CD8-positive, alpha-beta T cell (primary cell): ENCODE measurements at regions of chr17 and their contacts with region 1.

Region 1: GRCh38 chr17:75855310-75856081 is at the start of gene WBP2:
- DNase-seq: peak; percentile 93 to 100 (median 96)
- ATAC-seq: peak; percentile 90
- H3K4me3 ChIP-seq: peak within 1 kb of the TSS; percentile 79 to 83
- H3K4me3 Mint-ChIP-seq: no peak within 1 kb of the TSS
- H3K27ac ChIP-seq: peak within 1 kb of the TSS; percentile 84 to 94
- H3K27ac Mint-ChIP-seq: peak within 1 kb of the TSS; percentile 94
- H3K4me1 ChIP-seq: peaks cover 19% of the 10 kb centered on the region
- H3K4me1 Mint-ChIP-seq: peaks cover 29% of the 10 kb centered on the region
- H3K27me3 ChIP-seq: no peaks in the 10 kb centered on the region
- H3K27me3 Mint-ChIP-seq: no peaks in the 10 kb centered on the region
- CTCF ChIP-seq: peak; percentile 27
- total RNA-seq, gene WBP2: 69.1 to 80.2 TPM

Region 2: GRCh38 chr17:75576661-75577060 is 278.8 kb before region 1 on chr17:
- CTCF ChIA-PET with region 1: no interaction called
- POLR2A ChIA-PET with region 1: no interaction called
- intact Hi-C with region 1: no loop called
- DNase-seq: no peak
- ATAC-seq: no peak
- H3K4me3 ChIP-seq: no peak overlapping the region
- H3K4me3 Mint-ChIP-seq: no peak overlapping the region
- H3K27ac ChIP-seq: no peak overlapping the region
- H3K27ac Mint-ChIP-seq: no peak overlapping the region
- H3K4me1 ChIP-seq: no peaks in the 10 kb centered on the region
- H3K4me1 Mint-ChIP-seq: peaks cover 8% of the 10 kb centered on the region
- H3K27me3 ChIP-seq: no peaks in the 10 kb centered on the region
- H3K27me3 Mint-ChIP-seq: no peaks in the 10 kb centered on the region
- CTCF ChIP-seq: no peak

Region 3: GRCh38 chr17:75764711-75765421 is 90.6 kb before region 1 on chr17 and contains the start of gene GALK1:
- CTCF ChIA-PET with region 1: interaction called, 3 read pairs
- POLR2A ChIA-PET with region 1: interaction called, 25 read pairs
- intact Hi-C with region 1: no loop called
- DNase-seq: peak; percentile 46 to 89 (median 70)
- ATAC-seq: peak; percentile 94
- H3K4me3 ChIP-seq: peak within 1 kb of the TSS; percentile 62 to 86
- H3K4me3 Mint-ChIP-seq: peak within 1 kb of the TSS; percentile 74
- H3K27ac ChIP-seq: peak within 1 kb of the TSS; percentile 51 to 63
- H3K27ac Mint-ChIP-seq: peak within 1 kb of the TSS; percentile 55
- H3K4me1 ChIP-seq: peaks cover 16% of the 10 kb centered on the region
- H3K4me1 Mint-ChIP-seq: peaks cover 8% of the 10 kb centered on the region
- H3K27me3 ChIP-seq: no peaks in the 10 kb centered on the region
- H3K27me3 Mint-ChIP-seq: no peaks in the 10 kb centered on the region
- CTCF ChIP-seq: peak; percentile 40
- total RNA-seq, gene GALK1: 3.4 to 3.7 TPM

Region 4: GRCh38 chr17:75827252-75828115 is 28.0 kb before region 1 on chr17:
- CTCF ChIA-PET with region 1: interaction called, 8 read pairs
- POLR2A ChIA-PET with region 1: interaction called, 20 read pairs
- intact Hi-C with region 1: loop called in 1 of 2 experiments (anchors 2 kb)
- DNase-seq: peak in 8 of 9 experiments; percentile 46 to 85 (median 72)
- ATAC-seq: peak; percentile 66
- H3K4me3 ChIP-seq: peak overlapping the region; percentile 33 to 39
- H3K4me3 Mint-ChIP-seq: peak overlapping the region; percentile 55
- H3K27ac ChIP-seq: peak overlapping the region; percentile 50 to 78
- H3K27ac Mint-ChIP-seq: peak overlapping the region; percentile 88
- H3K4me1 ChIP-seq: peaks cover 31% of the 10 kb centered on the region
- H3K4me1 Mint-ChIP-seq: peaks cover 21% of the 10 kb centered on the region
- H3K27me3 ChIP-seq: no peaks in the 10 kb centered on the region
- H3K27me3 Mint-ChIP-seq: no peaks in the 10 kb centered on the region
- CTCF ChIP-seq: peak; percentile 65

Region 5: GRCh38 chr17:75877752-75878173 is 22.3 kb after region 1 on chr17:
- CTCF ChIA-PET with region 1: interaction called, 51 read pairs
- POLR2A ChIA-PET with region 1: interaction called, 41 read pairs
- intact Hi-C with region 1: loop called (anchors 1 kb)
- DNase-seq: peak; percentile 44 to 85 (median 72)
- ATAC-seq: peak; percentile 67
- H3K4me3 ChIP-seq: peak overlapping the region; percentile 41 to 60
- H3K4me3 Mint-ChIP-seq: peak overlapping the region; percentile 88
- H3K27ac ChIP-seq: peak overlapping the region in 1 of 2 experiments; percentile 0
- H3K27ac Mint-ChIP-seq: peak overlapping the region; percentile 80
- H3K4me1 ChIP-seq: peaks cover 42% of the 10 kb centered on the region
- H3K4me1 Mint-ChIP-seq: peaks cover 46% of the 10 kb centered on the region
- H3K27me3 ChIP-seq: peaks cover 0 to 8% of the 10 kb centered on the region in 2 experiments
- H3K27me3 Mint-ChIP-seq: no peaks in the 10 kb centered on the region
- CTCF ChIP-seq: peak; percentile 69

Region 6: GRCh38 chr17:75940724-75941441 is 85.4 kb after region 1 on chr17 and contains the start of gene FBF1:
- CTCF ChIA-PET with region 1: no interaction called
- POLR2A ChIA-PET with region 1: interaction called, 3 read pairs
- intact Hi-C with region 1: loop called (anchors 1 to 2 kb)
- DNase-seq: peak; percentile 64 to 92 (median 84)
- ATAC-seq: peak; percentile 99
- H3K4me3 ChIP-seq: peak within 1 kb of the TSS; percentile 61 to 84
- H3K4me3 Mint-ChIP-seq: peak within 1 kb of the TSS; percentile 91
- H3K27ac ChIP-seq: peak within 1 kb of the TSS; percentile 49 to 72
- H3K27ac Mint-ChIP-seq: peak within 1 kb of the TSS; percentile 86
- H3K4me1 ChIP-seq: peaks cover 15% of the 10 kb centered on the region
- H3K4me1 Mint-ChIP-seq: peaks cover 13% of the 10 kb centered on the region
- H3K27me3 ChIP-seq: no peaks in the 10 kb centered on the region
- H3K27me3 Mint-ChIP-seq: no peaks in the 10 kb centered on the region
- CTCF ChIP-seq: no peak
- total RNA-seq, gene FBF1: 18.6 to 21.1 TPM

Region 7: GRCh38 chr17:76103274-76104139 is 248.0 kb after region 1 on chr17 and contains the start of gene EXOC7:
- CTCF ChIA-PET with region 1: no interaction called
- POLR2A ChIA-PET with region 1: interaction called, 3 read pairs
- intact Hi-C with region 1: loop called in 1 of 2 experiments (anchors 1 kb)
- DNase-seq: peak; percentile 83 to 97 (median 93)
- ATAC-seq: peak; percentile 93
- H3K4me3 ChIP-seq: peak within 1 kb of the TSS; percentile 74 to 75
- H3K4me3 Mint-ChIP-seq: peak within 1 kb of the TSS; percentile 98
- H3K27ac ChIP-seq: peak within 1 kb of the TSS; percentile 61 to 77
- H3K27ac Mint-ChIP-seq: peak within 1 kb of the TSS; percentile 95
- H3K4me1 ChIP-seq: peaks cover 21% of the 10 kb centered on the region
- H3K4me1 Mint-ChIP-seq: peaks cover 29% of the 10 kb centered on the region
- H3K27me3 ChIP-seq: no peaks in the 10 kb centered on the region
- H3K27me3 Mint-ChIP-seq: no peaks in the 10 kb centered on the region
- CTCF ChIP-seq: no peak
- total RNA-seq, gene EXOC7: 97.3 to 101 TPM

Region 8: DNA sequence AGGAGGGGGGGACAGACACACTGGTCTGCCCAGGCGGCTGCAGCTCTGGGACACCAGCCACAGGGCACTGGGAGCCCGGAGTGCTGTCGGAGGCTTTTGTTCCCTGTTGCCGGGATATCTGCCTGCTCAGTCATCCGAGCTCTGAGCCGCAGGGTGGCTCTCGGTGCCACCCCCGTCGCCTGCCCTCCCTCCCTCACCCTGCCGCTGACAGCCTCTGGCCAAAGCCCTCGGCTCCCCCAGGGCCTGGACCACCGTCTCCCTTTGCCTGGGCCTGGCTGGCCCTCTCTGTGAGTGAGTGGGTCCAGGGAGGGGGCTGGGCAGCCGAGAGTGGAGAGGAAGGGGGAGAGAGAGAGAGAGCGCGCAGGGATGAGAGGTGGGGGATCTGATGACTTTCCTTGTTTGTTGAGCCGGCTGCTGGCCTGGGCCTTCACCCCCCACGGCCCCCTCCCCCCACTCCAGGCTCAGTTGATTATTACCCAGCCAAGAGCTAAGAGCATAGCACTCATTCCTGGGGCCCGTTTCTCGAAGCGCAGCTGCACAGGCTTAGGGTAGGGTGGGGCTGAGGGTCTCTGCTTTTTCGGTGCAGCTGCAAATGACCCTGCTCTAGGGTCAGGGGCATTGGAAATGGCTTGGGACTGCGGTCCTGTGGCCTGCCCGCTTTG is 282.9 kb after region 1 on chr17:
- CTCF ChIA-PET with region 1: no interaction called
- POLR2A ChIA-PET with region 1: no interaction called
- intact Hi-C with region 1: no loop called
- DNase-seq: no peak
- ATAC-seq: no peak
- H3K4me3 ChIP-seq: no peak overlapping the region
- H3K4me3 Mint-ChIP-seq: no peak overlapping the region
- H3K27ac ChIP-seq: no peak overlapping the region
- H3K27ac Mint-ChIP-seq: no peak overlapping the region
- H3K4me1 ChIP-seq: peaks cover 68% of the 10 kb centered on the region
- H3K4me1 Mint-ChIP-seq: peaks cover 58% of the 10 kb centered on the region
- H3K27me3 ChIP-seq: peaks cover 0 to 8% of the 10 kb centered on the region in 2 experiments
- H3K27me3 Mint-ChIP-seq: no peaks in the 10 kb centered on the region
- CTCF ChIP-seq: no peak